PC-9 (cell line): ENCODE measurements at regions of chr16 and their contacts with region 1.

Region 1: GRCh38 chr16:81181013-81181720 is 57.3 kb upstream of the BCO1 start:
- DNase-seq: peak; percentile 92 to 97
- H3K4me3 ChIP-seq: peak overlapping the region; percentile 42
- H3K27ac ChIP-seq: peak overlapping the region; percentile 72
- H3K4me1 ChIP-seq: peaks cover 30% of the 10 kb centered on the region
- H3K27me3 ChIP-seq: no peaks in the 10 kb centered on the region
- CTCF ChIP-seq: no peak

Region 2: GRCh38 chr16:80862160-80862705 is 318.9 kb before region 1 on chr16:
- CTCF ChIA-PET with region 1: no interaction called
- POLR2A ChIA-PET with region 1: no interaction called
- intact Hi-C with region 1: no loop called
- DNase-seq: no peak
- H3K4me3 ChIP-seq: no peak overlapping the region
- H3K27ac ChIP-seq: no peak overlapping the region
- H3K4me1 ChIP-seq: no peaks in the 10 kb centered on the region
- H3K27me3 ChIP-seq: no peaks in the 10 kb centered on the region
- CTCF ChIP-seq: no peak

Region 3: DNA sequence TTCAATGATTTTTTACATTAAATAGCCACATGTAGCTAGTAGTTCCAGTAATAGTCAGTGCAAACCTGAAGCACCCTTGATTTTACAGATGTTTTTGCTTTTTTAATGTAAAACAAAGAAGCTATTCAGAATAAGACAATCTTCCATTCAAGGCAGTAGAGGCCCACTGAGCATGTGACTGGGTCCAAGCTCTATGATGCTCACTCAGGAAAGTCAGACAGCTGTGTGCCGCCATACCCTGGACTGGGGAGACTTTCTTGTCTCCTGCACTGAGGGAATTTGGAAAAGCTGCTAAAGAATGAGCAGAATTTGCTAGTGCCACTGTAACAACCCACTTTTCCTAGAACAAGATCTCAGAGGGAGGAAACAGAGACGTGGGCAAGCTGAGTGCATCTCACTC is 162.7 kb before region 1 on chr16:
- CTCF ChIA-PET with region 1: interaction called, 10 read pairs
- POLR2A ChIA-PET with region 1: no interaction called
- intact Hi-C with region 1: no loop called
- DNase-seq: no peak
- H3K4me3 ChIP-seq: no peak overlapping the region
- H3K27ac ChIP-seq: no peak overlapping the region
- H3K4me1 ChIP-seq: no peaks in the 10 kb centered on the region
- H3K27me3 ChIP-seq: no peaks in the 10 kb centered on the region
- CTCF ChIP-seq: no peak

Region 4: GRCh38 chr16:81077076-81077940 is 103.9 kb before region 1 on chr16 and contains the start of gene C16orf46:
- CTCF ChIA-PET with region 1: no interaction called
- POLR2A ChIA-PET with region 1: no interaction called
- intact Hi-C with region 1: loop called (anchors 5 kb)
- DNase-seq: peak; percentile 91 to 97
- H3K4me3 ChIP-seq: peak within 1 kb of the TSS; percentile 76
- H3K27ac ChIP-seq: peak within 1 kb of the TSS; percentile 79
- H3K4me1 ChIP-seq: peaks cover 17% of the 10 kb centered on the region; the same call in 1 of the 2 replicates
- H3K27me3 ChIP-seq: no peaks in the 10 kb centered on the region
- CTCF ChIP-seq: no peak
- total RNA-seq, gene C16orf46: 0.92 and 2.3 TPM in 2 replicates

Region 5: DNA sequence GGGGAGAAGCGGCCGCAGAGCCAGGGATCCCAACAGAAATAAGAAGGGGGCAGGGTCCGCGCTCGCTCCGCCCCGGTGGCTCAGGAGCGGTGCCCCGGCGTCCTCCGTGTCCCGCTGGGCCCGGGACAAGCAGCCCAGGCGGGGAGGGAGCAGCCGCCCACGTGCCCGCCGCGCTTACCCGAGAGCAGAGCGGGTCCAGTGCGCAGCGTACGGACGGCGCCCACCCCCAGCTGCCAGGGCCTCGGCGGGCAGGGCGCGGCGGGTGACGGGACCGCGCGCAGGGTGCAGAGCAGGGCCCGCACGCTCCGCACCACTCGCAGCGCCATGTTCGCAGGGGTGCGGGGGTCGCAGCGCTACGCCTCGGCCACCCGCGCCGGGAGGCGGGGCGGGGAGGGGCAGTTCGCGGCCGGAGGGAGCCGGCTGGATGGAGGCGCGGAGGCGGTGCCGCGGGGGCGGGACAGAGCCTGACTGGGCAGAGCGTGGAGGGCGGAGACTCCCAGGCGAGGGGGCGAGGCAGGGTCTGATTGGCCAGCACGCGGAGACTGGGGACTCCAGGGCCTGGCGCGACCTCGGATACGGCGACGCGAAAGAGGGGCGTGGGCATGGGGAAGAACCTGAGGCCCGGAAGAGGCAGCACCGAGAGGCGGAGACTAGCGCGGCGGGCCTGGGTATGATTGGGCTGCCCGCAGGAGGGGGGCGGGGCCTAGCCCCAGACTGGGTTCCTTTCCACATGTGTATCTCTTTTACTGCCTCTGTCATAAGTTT is 85.0 kb before region 1 on chr16 and contains the start of gene GCSH:
- CTCF ChIA-PET with region 1: no interaction called
- POLR2A ChIA-PET with region 1: no interaction called
- intact Hi-C with region 1: loop called (anchors 1 kb)
- DNase-seq: peak; percentile 94 to 99
- H3K4me3 ChIP-seq: peak within 1 kb of the TSS; percentile 98
- H3K27ac ChIP-seq: peak within 1 kb of the TSS; percentile 77
- H3K4me1 ChIP-seq: peaks cover 29% of the 10 kb centered on the region
- H3K27me3 ChIP-seq: no peaks in the 10 kb centered on the region
- CTCF ChIP-seq: no peak
- total RNA-seq, gene GCSH: 51.7 and 71.1 TPM in 2 replicates

Region 6: GRCh38 chr16:81140930-81141780 is 40.0 kb before region 1 on chr16:
- CTCF ChIA-PET with region 1: no interaction called
- POLR2A ChIA-PET with region 1: interaction called, 7 read pairs
- intact Hi-C with region 1: loop called (anchors 1 kb)
- DNase-seq: peak in 1 of 2 experiments; percentile 19
- H3K4me3 ChIP-seq: no peak overlapping the region
- H3K27ac ChIP-seq: peak overlapping the region; percentile 98
- H3K4me1 ChIP-seq: peaks cover 58% of the 10 kb centered on the region
- H3K27me3 ChIP-seq: no peaks in the 10 kb centered on the region
- CTCF ChIP-seq: peak; percentile 58